ENCODE measurements at regions of chr16 and their contacts with region 1.

Region 1: DNA sequence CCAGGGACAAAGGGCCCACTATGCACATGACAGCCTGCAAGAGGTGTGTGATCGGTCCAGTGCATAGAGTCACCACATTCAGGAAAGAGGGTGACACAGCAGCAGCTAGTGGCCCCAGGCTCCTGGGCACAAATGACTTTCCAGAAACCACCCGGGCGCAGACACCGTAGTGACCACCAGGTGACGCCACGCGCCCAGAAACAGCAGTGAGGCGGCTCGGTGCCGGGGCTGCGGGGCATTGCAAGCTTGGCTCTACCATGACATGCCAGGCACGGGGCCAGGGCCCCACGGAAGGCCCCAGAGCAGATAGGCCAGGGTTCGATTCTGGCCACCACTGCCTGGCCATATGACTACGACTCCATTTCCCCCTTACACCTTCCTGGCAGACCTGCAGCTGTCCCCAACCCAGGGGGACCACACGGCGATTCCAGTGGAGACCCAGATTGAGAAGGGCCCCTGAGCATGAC is 6.7 kb downstream of the RHBDF1 start:
- DNase-seq: peak; percentile 80
- H3K4me3 ChIP-seq: no peak overlapping the region
- H3K27ac ChIP-seq: peak overlapping the region in 1 of 2 donors; percentile 18
- H3K4me1 ChIP-seq: peaks cover 10% of the 10 kb centered on the region
- H3K27me3 ChIP-seq: no peaks in the 10 kb centered on the region
- CTCF ChIP-seq: peak; percentile 86 to 98 (median 96)
- POLR2A ChIP-seq: no peak

Region 2: DNA sequence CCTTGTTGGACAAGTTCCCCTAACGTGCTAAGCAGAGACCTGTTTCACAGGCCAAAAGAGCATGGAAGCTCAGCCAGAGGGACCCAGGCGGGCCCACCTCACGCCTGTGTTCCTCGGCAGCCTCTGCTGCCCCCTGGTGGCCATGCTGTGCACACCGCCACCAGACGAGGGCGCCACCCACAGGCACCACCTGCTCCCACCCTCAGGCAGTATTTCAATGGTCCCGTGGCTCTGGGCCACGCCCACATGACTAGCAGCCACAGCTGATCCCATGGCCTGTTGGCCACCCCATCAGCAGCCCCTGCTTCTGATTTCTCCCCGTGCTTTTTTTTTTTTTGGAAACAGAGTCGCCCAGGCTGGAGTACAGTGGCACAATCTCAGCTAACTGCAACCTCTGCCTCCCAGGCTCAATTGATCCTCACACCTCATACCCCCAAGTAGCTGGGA is 31.3 kb after region 1 on chr16:
- intact Hi-C with region 1: loop called (anchors 2 kb)
- DNase-seq: peak; percentile 86
- H3K4me3 ChIP-seq: no peak overlapping the region
- H3K27ac ChIP-seq: no peak overlapping the region
- H3K4me1 ChIP-seq: peaks cover 2% of the 10 kb centered on the region
- H3K27me3 ChIP-seq: no peaks in the 10 kb centered on the region
- CTCF ChIP-seq: peak; percentile 97 to 100 (median 100)
- POLR2A ChIP-seq: peak; percentile 22

Region 3: DNA sequence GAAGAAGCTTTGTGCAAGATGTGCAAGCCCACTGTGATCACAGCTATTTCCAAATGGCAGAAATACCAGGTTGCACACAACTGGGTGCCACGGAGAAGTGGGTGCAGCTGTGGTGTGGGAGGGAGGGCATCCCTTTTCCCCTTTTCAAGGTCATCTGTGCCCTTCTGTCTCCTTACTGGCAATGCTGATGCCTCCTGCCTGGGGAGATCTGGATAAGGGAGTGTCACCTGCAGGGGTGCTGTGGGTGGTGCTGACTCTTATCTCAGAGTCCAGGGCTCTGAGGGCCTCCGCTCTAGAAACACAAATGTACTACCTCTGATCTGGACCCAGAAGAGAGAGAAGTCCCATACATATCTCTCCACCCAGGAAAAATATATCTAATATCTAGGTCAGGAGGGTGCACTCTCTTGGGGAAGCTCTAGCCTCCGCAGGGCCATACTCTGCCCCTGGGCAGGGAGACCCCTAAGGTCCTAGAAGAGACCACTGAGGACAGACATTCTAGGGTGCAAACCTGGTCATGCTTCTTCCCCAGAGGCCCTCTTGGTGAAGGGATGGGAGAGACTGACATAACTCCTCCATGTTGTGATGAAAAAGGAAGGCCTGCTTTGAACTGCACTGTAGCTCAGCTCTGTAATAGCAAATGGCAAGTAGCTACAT is 54.3 kb after region 1 on chr16:
- intact Hi-C with region 1: no loop called
- DNase-seq: no peak
- H3K4me3 ChIP-seq: no peak overlapping the region
- H3K27ac ChIP-seq: no peak overlapping the region
- H3K4me1 ChIP-seq: no peaks in the 10 kb centered on the region
- H3K27me3 ChIP-seq: no peaks in the 10 kb centered on the region
- CTCF ChIP-seq: no peak
- POLR2A ChIP-seq: no peak

Region 4: DNA sequence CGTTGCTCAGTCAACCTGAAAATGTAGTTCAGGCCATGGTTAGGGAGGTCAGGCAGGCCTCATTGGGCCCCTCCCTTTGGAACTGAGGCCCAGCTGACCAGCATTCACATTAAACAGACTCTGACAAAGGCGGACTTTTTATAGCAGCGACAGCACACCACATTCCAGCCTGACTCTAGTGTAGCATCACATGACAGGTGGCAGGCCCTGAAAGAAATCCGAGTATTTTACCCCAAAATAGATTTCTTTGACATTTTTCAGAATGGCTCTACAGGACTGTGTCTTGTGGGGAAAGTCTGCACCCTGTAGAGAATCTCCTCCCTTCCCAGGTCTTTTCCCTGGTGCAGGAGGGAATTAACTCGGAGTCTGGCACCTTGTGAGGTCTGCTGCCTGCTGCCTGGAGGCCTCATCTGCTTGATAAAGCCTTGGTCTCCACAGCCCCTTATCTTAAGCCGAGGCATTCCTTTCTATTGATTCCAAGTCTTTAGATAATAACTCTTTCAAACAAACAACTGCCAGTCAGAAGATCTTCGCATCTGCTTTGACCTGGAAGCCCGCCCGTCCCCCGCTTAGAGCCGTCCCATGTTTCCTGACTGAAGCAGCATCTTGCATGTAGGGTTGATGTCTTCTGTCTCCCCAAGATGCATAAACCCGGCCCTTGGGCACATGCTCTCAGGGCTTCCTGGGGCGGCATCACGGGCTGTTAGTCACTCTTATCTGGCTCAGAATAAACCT is 417.8 kb after region 1 on chr16:
- intact Hi-C with region 1: no loop called
- DNase-seq: no peak
- H3K4me3 ChIP-seq: no peak overlapping the region
- H3K27ac ChIP-seq: no peak overlapping the region
- H3K4me1 ChIP-seq: no peaks in the 10 kb centered on the region
- H3K27me3 ChIP-seq: no peaks in the 10 kb centered on the region
- CTCF ChIP-seq: no peak
- POLR2A ChIP-seq: no peak

Region 5: DNA sequence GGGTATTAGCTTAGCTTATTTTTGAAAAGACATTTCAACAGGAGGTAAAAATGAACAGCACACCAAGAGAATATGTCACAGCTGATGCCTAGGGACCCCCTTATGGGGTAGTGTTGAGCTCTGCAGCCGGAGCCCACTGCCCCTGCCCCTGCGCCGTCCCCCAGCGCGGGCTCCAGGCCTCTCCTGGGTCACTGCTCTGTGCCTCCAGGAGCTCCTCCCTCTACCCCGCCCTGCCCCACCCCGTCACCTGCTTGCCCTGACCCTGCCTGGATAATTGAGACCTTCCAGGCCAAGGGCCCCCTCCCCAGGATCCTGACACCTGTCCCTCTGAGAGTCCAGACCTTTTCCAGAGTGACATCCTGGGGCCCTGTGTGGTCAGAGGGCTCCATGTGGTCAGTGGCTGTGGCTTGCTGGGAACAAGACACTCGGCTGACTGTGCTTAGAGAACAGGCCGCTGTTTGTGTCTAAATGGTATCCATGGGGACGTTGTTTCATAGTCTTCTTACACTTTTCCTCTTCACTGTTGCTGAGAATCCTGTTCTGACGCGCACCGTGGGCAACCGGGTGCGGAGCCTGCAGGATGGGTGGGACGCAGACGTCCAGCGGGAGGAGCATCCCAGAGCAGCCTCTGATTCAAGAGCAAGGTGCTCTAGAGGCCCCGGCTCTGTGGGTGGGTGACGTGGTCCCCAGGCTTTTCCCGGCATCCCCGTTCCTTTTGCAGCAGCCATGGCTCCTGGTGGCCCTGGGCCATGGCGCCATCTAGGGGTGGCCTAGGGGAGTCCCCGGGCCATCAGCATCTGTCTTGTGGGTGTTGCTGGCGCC is 545.0 kb after region 1 on chr16:
- intact Hi-C with region 1: no loop called
- DNase-seq: no peak
- H3K4me3 ChIP-seq: no peak overlapping the region
- H3K27ac ChIP-seq: no peak overlapping the region
- H3K4me1 ChIP-seq: peaks cover 4% of the 10 kb centered on the region
- H3K27me3 ChIP-seq: no peaks in the 10 kb centered on the region
- CTCF ChIP-seq: peak; percentile 50 to 91 (median 77)
- POLR2A ChIP-seq: no peak

Measured in prostate gland (tissue), 2 donors.